ENCODE measurements at regions of chr2 and their contacts with region 1.

Region 1: GRCh38 chr2:105187531-105187930 is 54.0 kb upstream of the GPR45 start:
- DNase-seq: no peak
- H3K4me3 ChIP-seq: no peak overlapping the region
- H3K27ac ChIP-seq: no peak overlapping the region
- H3K4me1 ChIP-seq: no peaks in the 10 kb centered on the region
- H3K27me3 ChIP-seq: no peaks in the 10 kb centered on the region
- CTCF ChIP-seq: no peak
- POLR2A ChIP-seq: no peak

Region 2: DNA sequence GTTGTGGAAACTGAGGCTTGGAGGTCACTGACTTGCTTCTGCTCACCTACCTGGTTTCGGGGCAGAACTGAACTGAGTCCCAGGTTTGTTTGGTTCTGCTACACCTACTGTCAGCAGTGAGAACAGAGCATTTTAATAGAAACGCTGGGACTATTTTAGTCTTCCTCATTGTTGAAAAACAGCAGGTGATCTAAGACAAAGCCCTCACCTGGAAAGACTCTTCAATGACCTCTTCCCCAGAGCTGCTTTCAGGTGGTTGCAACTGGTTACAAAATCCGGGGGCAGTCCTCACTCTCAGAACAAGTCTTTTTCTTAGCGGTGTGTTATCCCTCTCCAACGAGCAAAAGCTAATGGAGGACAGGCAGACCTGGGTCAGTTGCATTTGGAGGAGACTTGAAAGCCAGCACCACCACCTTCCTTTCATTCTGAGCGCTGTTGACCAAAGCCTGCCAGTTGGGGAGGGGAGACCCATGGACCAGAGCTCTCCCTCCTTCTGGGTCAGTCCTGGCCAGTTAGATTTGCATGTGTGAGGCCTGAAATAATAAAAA is 774.1 kb after region 1 on chr2:
- intact Hi-C with region 1: loop called (anchors 5 kb)
- DNase-seq: no peak
- H3K4me3 ChIP-seq: no peak overlapping the region
- H3K27ac ChIP-seq: no peak overlapping the region
- H3K4me1 ChIP-seq: no peaks in the 10 kb centered on the region
- H3K27me3 ChIP-seq: no peaks in the 10 kb centered on the region
- CTCF ChIP-seq: no peak
- POLR2A ChIP-seq: no peak